Left cardiac atrium (tissue), 4 donors: ENCODE measurements at regions of chr14 and their contacts with region 1.

Region 1: GRCh38 chr14:57199921-57200320 is 68.8 kb downstream of the EXOC5 start:
- DNase-seq: no peak
- ATAC-seq: no peak

Region 2: DNA sequence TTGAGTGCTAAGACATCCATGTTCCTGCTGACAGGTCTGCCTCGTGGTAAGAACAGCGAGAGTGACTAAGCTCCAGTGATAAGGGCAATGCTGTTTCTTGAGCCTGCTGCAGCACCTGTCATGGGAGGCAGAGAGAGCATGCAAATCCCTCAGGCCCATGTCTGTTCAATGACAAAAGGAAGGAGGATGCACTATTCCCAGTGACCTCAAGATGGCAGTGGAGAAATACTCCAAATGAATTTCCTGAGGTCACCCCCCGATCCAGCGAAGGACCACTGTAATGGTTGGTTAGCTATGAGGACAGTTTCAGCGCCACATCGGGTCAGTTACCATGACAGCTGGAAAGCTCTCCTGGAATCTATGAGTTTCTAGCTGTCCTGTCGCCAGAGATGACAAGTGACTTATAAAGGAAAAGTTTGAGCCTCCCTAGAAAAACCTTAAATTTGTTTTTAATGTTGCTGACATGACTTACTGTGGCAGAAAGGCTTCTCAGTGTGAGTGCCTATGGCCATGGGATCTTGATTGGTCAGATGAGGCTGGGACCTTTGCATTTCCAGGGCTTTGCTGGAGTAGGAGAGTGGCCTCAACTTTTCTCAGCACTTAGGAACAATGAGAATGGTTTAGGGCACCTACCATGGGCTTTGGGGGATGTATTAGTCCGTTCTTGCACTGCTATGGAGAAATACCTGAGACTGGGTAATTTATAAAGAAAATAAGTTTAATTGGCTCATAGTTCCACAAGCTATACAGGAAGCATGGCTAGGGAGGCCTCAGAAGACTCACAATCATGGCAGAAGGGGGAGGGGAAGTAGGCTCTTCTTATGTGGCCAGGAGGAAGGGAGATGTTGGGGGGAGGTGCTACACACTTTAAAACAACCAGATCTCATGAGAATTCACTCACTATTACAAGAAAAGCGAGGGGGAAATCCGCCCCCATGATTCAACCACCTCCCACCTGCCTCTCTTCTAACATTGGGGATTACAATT is 708.3 kb before region 1 on chr14:
- intact Hi-C with region 1: loop called in 1 of 2 experiments (anchors 10 kb)
- DNase-seq: no peak
- ATAC-seq: peak; percentile 55 to 65

Region 3: GRCh38 chr14:56555921-56556570 is 643.9 kb before region 1 on chr14:
- intact Hi-C with region 1: loop called in 1 of 2 experiments (anchors 5 kb)
- DNase-seq: no peak
- ATAC-seq: no peak